ENCODE measurements at regions of chr7 and their contacts with region 1.

Region 1: GRCh38 chr7:95871078-95871782 is 98.9 kb downstream of the DYNC1I1 start:
- DNase-seq: peak in 3 of 5 donors; percentile 58 to 86 (median 73)
- H3K4me3 ChIP-seq: no peak overlapping the region
- H3K27ac ChIP-seq: no peak overlapping the region
- H3K4me1 ChIP-seq: no peaks in the 10 kb centered on the region
- H3K27me3 ChIP-seq: no peaks in the 10 kb centered on the region
- CTCF ChIP-seq: peak; percentile 59

Region 2: DNA sequence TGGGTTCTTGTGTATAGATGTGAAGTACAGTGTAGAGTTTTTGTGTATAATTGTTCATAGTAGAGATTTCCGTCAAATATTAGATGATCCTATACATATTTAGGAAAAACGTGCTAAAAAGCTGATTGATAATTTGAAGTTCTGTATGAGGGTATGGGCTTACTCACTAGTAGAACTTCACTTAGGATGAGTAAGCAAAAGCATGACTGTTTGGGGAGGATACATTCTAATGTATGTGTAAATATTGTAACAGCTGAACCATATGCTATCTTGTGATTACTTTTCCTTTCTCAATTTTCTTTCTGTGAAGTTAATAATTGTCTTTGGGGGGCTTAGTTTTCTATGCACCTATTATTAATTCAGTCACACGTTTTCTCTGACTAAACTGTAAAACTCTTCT is 221.7 kb before region 1 on chr7:
- intact Hi-C with region 1: no loop called
- DNase-seq: no peak
- H3K4me3 ChIP-seq: no peak overlapping the region
- H3K27ac ChIP-seq: no peak overlapping the region
- H3K4me1 ChIP-seq: no peaks in the 10 kb centered on the region
- H3K27me3 ChIP-seq: no peaks in the 10 kb centered on the region
- CTCF ChIP-seq: no peak

Region 3: GRCh38 chr7:95723592-95724180 is 147.5 kb before region 1 on chr7:
- intact Hi-C with region 1: loop called (anchors 10 kb)
- DNase-seq: peak in 4 of 5 donors; percentile 38 to 77 (median 60)
- H3K4me3 ChIP-seq: no peak overlapping the region
- H3K27ac ChIP-seq: no peak overlapping the region
- H3K4me1 ChIP-seq: no peaks in the 10 kb centered on the region
- H3K27me3 ChIP-seq: no peaks in the 10 kb centered on the region
- CTCF ChIP-seq: peak; percentile 66

Region 4: GRCh38 chr7:95950698-95951097 is 79.5 kb after region 1 on chr7:
- intact Hi-C with region 1: no loop called
- DNase-seq: no peak
- H3K4me3 ChIP-seq: no peak overlapping the region
- H3K27ac ChIP-seq: no peak overlapping the region
- H3K4me1 ChIP-seq: no peaks in the 10 kb centered on the region
- H3K27me3 ChIP-seq: no peaks in the 10 kb centered on the region
- CTCF ChIP-seq: no peak